A549 (cell line): ENCODE measurements at regions of chr10 and their contacts with region 1.

Region 1: GRCh38 chr10:59625721-59626522 is 83.7 kb downstream of the SLC16A9 start:
- DNase-seq: peak; percentile 59 to 73
- ATAC-seq: peak; percentile 91 to 94; a peak in 5 of 6 replicates
- H3K4me3 ChIP-seq: no peak overlapping the region
- H3K27ac ChIP-seq: no peak overlapping the region
- H3K4me1 ChIP-seq: no peaks in the 10 kb centered on the region
- CTCF ChIP-seq: peak; percentile 91
- EP300 ChIP-seq: no peak
- POLR2A ChIP-seq: no peak
- RAD21 ChIP-seq: peak; percentile 95 to 96

Region 2: GRCh38 chr10:58952747-58953466 is 673.0 kb before region 1 on chr10:
- CTCF ChIA-PET with region 1: interaction called, 51 read pairs
- POLR2A ChIA-PET with region 1: no interaction called
- DNase-seq: peak; percentile 20 to 52
- ATAC-seq: peak; percentile 76 to 91
- H3K4me3 ChIP-seq: no peak overlapping the region
- H3K27ac ChIP-seq: peak overlapping the region in 1 of 2 experiments; percentile 46; a peak in 2 of 6 replicates
- H3K4me1 ChIP-seq: peaks cover 16% of the 10 kb centered on the region
- CTCF ChIP-seq: peak; percentile 92
- EP300 ChIP-seq: no peak
- POLR2A ChIP-seq: no peak
- RAD21 ChIP-seq: peak; percentile 93 to 95

Region 3: GRCh38 chr10:59227136-59227673 is 398.7 kb before region 1 on chr10:
- CTCF ChIA-PET with region 1: no interaction called
- POLR2A ChIA-PET with region 1: no interaction called
- DNase-seq: peak in 1 of 2 experiments; percentile 6
- ATAC-seq: no peak
- H3K4me3 ChIP-seq: no peak overlapping the region
- H3K27ac ChIP-seq: no peak overlapping the region
- H3K4me1 ChIP-seq: no peaks in the 10 kb centered on the region
- CTCF ChIP-seq: peak; percentile 18; the same call in 2 of the 3 replicates
- EP300 ChIP-seq: no peak
- POLR2A ChIP-seq: no peak
- RAD21 ChIP-seq: peak in 1 of 2 experiments; percentile 34; a peak in 2 of 5 replicates

Region 4: DNA sequence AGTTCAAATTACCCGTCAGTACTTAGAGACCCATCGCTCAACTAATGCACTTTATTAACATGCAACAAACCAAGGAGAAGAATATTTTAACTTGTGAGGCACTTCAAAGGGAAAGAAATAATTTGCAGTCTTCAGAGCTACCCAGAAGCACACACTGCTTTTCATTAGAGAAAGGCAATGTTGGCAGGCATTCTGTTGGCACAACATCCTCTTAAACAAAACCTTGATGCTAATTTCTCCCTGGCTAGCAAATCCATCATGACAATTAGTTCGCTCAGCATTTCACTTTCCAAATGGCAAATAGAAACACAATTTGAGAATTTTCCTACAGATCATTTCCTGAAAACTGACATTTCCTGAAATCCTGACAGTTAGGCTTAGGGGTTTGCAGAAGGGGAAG is 107.9 kb before region 1 on chr10:
- CTCF ChIA-PET with region 1: no interaction called
- POLR2A ChIA-PET with region 1: no interaction called
- DNase-seq: no peak
- ATAC-seq: no peak
- H3K4me3 ChIP-seq: no peak overlapping the region
- H3K27ac ChIP-seq: no peak overlapping the region
- H3K4me1 ChIP-seq: no peaks in the 10 kb centered on the region
- CTCF ChIP-seq: no peak
- EP300 ChIP-seq: no peak
- POLR2A ChIP-seq: no peak
- RAD21 ChIP-seq: no peak

Region 5: GRCh38 chr10:59580026-59580863 is 45.7 kb before region 1 on chr10:
- CTCF ChIA-PET with region 1: interaction called, 11 read pairs
- POLR2A ChIA-PET with region 1: no interaction called
- DNase-seq: peak; percentile 15 to 39
- ATAC-seq: no peak
- H3K4me3 ChIP-seq: no peak overlapping the region
- H3K27ac ChIP-seq: no peak overlapping the region
- H3K4me1 ChIP-seq: no peaks in the 10 kb centered on the region
- CTCF ChIP-seq: peak; percentile 57
- EP300 ChIP-seq: no peak
- POLR2A ChIP-seq: no peak
- RAD21 ChIP-seq: peak; percentile 58 to 65

Region 6: GRCh38 chr10:59741048-59741447 is 115.1 kb after region 1 on chr10:
- CTCF ChIA-PET with region 1: no interaction called
- POLR2A ChIA-PET with region 1: no interaction called
- DNase-seq: no peak
- ATAC-seq: no peak
- H3K4me3 ChIP-seq: no peak overlapping the region
- H3K27ac ChIP-seq: no peak overlapping the region
- H3K4me1 ChIP-seq: no peaks in the 10 kb centered on the region
- CTCF ChIP-seq: no peak
- EP300 ChIP-seq: no peak
- POLR2A ChIP-seq: no peak
- RAD21 ChIP-seq: no peak

Region 7: GRCh38 chr10:59808896-59809643 is 183.1 kb after region 1 on chr10:
- CTCF ChIA-PET with region 1: interaction called, 17 read pairs
- POLR2A ChIA-PET with region 1: no interaction called
- DNase-seq: peak; percentile 51 to 66
- ATAC-seq: peak; percentile 88 to 95; a peak in 5 of 6 replicates
- H3K4me3 ChIP-seq: no peak overlapping the region
- H3K27ac ChIP-seq: no peak overlapping the region
- H3K4me1 ChIP-seq: no peaks in the 10 kb centered on the region
- CTCF ChIP-seq: peak; percentile 63
- EP300 ChIP-seq: no peak
- POLR2A ChIP-seq: no peak
- RAD21 ChIP-seq: peak; percentile 59 to 67

Region 8: GRCh38 chr10:60023155-60023877 is 397.4 kb after region 1 on chr10:
- CTCF ChIA-PET with region 1: interaction called, 26 read pairs
- POLR2A ChIA-PET with region 1: no interaction called
- DNase-seq: no peak
- ATAC-seq: no peak
- H3K4me3 ChIP-seq: no peak overlapping the region
- H3K27ac ChIP-seq: no peak overlapping the region
- H3K4me1 ChIP-seq: no peaks in the 10 kb centered on the region
- CTCF ChIP-seq: no peak
- EP300 ChIP-seq: no peak
- POLR2A ChIP-seq: no peak
- RAD21 ChIP-seq: no peak

Region 9: DNA sequence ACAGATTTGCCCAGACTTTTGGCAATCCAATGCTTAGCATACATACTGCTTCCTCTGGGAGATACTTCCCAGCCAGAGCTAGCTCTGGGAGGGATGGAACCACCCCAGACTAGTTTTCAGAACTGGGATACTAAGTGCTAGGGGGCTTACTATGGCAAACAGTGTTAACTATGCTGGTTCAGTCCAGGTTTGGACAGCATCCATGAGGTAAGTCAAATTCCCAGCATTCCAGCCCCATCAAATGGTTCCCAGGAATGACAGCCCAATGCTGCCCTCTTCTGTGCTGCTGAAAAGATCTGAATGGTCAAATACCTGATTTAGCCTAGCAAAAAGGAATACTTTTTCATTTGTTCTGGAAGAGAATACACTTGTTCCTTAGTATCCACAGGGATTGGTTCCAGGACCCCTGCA is 422.2 kb after region 1 on chr10:
- CTCF ChIA-PET with region 1: interaction called, 30 read pairs
- POLR2A ChIA-PET with region 1: no interaction called
- DNase-seq: peak in 1 of 2 experiments; percentile 29
- ATAC-seq: peak; percentile 56 to 67; a peak in 5 of 6 replicates
- H3K4me3 ChIP-seq: no peak overlapping the region
- H3K27ac ChIP-seq: no peak overlapping the region
- H3K4me1 ChIP-seq: no peaks in the 10 kb centered on the region
- CTCF ChIP-seq: peak; percentile 39
- EP300 ChIP-seq: no peak
- POLR2A ChIP-seq: no peak
- RAD21 ChIP-seq: peak; percentile 63 to 66